ENCODE measurements at regions of chr5 and their contacts with region 1.

Region 1: DNA sequence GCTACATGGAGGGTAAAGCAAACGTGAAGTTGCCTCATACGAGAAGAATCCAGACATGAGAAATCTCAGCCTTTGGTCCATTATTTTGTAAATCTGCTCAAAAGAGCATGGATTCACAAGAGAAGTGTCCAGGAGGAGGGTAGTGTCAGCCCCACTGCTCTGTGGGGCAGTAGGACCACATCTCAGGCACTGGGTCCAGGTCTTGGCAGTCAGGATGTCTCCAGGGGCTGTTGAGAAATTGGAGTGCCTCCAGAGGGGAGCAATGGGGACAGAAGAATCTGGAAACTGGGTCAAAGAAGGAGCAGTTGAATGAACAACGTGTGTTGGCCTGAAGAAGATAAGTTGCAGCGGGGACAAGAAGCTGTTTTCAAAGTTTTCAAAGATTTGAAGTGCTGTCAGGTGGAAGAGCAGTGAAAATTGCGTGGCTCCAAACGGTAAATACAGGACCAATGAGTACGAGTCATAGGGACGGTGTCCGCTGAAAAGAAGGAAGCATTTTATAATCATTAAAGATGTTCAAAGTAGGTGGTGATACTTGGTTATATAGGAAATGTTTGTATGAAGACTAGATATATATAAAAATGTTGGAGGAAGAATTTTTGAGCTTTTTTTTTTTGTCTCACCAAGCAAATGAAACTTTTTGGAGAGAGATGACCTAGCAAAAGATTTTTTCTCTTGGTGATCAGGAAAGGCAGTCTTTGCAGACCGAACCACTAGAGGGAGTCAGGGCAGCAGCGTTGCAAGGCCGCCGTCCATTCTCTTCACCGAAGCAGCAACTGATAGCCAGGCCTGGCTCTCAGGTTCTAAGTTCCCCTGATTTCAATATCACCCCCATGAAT is 57.1 kb upstream of the ZBED3 start:
- DNase-seq: peak; percentile 42
- ATAC-seq: peak; percentile 88
- H3K4me3 ChIP-seq: no peak overlapping the region
- H3K27ac ChIP-seq: no peak overlapping the region
- H3K4me1 ChIP-seq: no peaks in the 10 kb centered on the region
- H3K27me3 ChIP-seq: no peaks in the 10 kb centered on the region
- CTCF ChIP-seq: peak; percentile 84
- EP300 ChIP-seq: no peak
- POLR2A ChIP-seq: no peak
- RAD21 ChIP-seq: peak; percentile 47; the same call in 1 of the 2 replicates

Region 2: GRCh38 chr5:77032654-77033034 is 111.6 kb before region 1 on chr5:
- CTCF ChIA-PET with region 1: no interaction called
- POLR2A ChIA-PET with region 1: no interaction called
- in situ Hi-C with region 1: no loop called
- intact Hi-C with region 1: no loop called
- DNase-seq: no peak
- ATAC-seq: no peak
- H3K4me3 ChIP-seq: no peak overlapping the region
- H3K27ac ChIP-seq: no peak overlapping the region
- H3K4me1 ChIP-seq: peaks cover 31% of the 10 kb centered on the region
- H3K27me3 ChIP-seq: no peaks in the 10 kb centered on the region; a peak in 1 of 5 replicates
- CTCF ChIP-seq: no peak
- EP300 ChIP-seq: no peak
- POLR2A ChIP-seq: no peak
- RAD21 ChIP-seq: no peak

Region 3: GRCh38 chr5:77120706-77121105 is 23.5 kb before region 1 on chr5:
- CTCF ChIA-PET with region 1: no interaction called
- POLR2A ChIA-PET with region 1: no interaction called
- in situ Hi-C with region 1: no loop called
- intact Hi-C with region 1: no loop called
- DNase-seq: no peak
- ATAC-seq: no peak
- H3K4me3 ChIP-seq: no peak overlapping the region
- H3K27ac ChIP-seq: no peak overlapping the region
- H3K4me1 ChIP-seq: no peaks in the 10 kb centered on the region
- H3K27me3 ChIP-seq: no peaks in the 10 kb centered on the region
- CTCF ChIP-seq: no peak
- EP300 ChIP-seq: no peak
- POLR2A ChIP-seq: no peak
- RAD21 ChIP-seq: no peak

Region 4: GRCh38 chr5:77239126-77239741 is 95.0 kb after region 1 on chr5:
- CTCF ChIA-PET with region 1: interaction called, 13 read pairs
- POLR2A ChIA-PET with region 1: no interaction called
- in situ Hi-C with region 1: loop called (anchors 5 kb)
- intact Hi-C with region 1: loop called (anchors 1 kb)
- DNase-seq: peak; percentile 12
- ATAC-seq: peak; percentile 64; the same call in 2 of the 3 replicates
- H3K4me3 ChIP-seq: no peak overlapping the region
- H3K27ac ChIP-seq: no peak overlapping the region
- H3K4me1 ChIP-seq: no peaks in the 10 kb centered on the region
- H3K27me3 ChIP-seq: 0 out of 5 replicates have a peak, but pooled peaks cover 0 to under 1% of the 10 kb centered on the region in 2 experiments
- CTCF ChIP-seq: no peak
- EP300 ChIP-seq: no peak
- POLR2A ChIP-seq: no peak
- RAD21 ChIP-seq: no peak

Region 5: DNA sequence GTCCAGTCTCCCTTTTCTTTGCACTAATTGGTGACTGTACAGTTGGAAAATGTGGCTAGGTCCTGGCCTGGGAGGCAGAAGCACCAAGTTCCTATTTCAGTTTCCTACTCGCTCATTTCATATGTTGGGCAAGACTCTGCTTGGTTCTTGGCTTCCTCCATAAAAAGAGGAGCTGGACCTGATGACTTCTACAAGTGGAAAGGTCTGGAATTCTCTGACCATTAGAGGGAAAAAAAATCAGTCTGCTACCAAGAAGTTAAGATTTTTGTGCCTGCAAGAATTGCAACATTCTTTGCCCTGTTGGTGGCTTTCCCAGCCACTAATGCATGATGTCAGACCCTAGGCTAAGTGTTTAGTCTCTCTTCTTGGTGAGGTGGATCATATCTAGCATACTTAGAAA is 256.4 kb after region 1 on chr5:
- CTCF ChIA-PET with region 1: no interaction called
- POLR2A ChIA-PET with region 1: no interaction called
- in situ Hi-C with region 1: no loop called
- intact Hi-C with region 1: no loop called
- DNase-seq: no peak
- ATAC-seq: no peak
- H3K4me3 ChIP-seq: no peak overlapping the region
- H3K27ac ChIP-seq: no peak overlapping the region
- H3K4me1 ChIP-seq: peaks cover 19% of the 10 kb centered on the region
- H3K27me3 ChIP-seq: peaks cover 0 to 10% of the 10 kb centered on the region in 2 experiments; a peak in 2 of 5 replicates
- CTCF ChIP-seq: no peak
- EP300 ChIP-seq: no peak
- POLR2A ChIP-seq: no peak
- RAD21 ChIP-seq: no peak

Region 6: GRCh38 chr5:77437194-77437593 is 293.0 kb after region 1 on chr5:
- CTCF ChIA-PET with region 1: interaction called, 4 read pairs
- POLR2A ChIA-PET with region 1: no interaction called
- in situ Hi-C with region 1: no loop called
- intact Hi-C with region 1: loop called (anchors 5 kb)
- DNase-seq: peak; percentile 18
- ATAC-seq: no peak
- H3K4me3 ChIP-seq: no peak overlapping the region
- H3K27ac ChIP-seq: no peak overlapping the region
- H3K4me1 ChIP-seq: no peaks in the 10 kb centered on the region
- H3K27me3 ChIP-seq: no peaks in the 10 kb centered on the region
- CTCF ChIP-seq: peak; percentile 61
- EP300 ChIP-seq: no peak
- POLR2A ChIP-seq: no peak
- RAD21 ChIP-seq: no peak

Region 7: GRCh38 chr5:77491783-77492652 is 347.8 kb after region 1 on chr5 and contains the start of gene WDR41:
- CTCF ChIA-PET with region 1: interaction called, 14 read pairs
- POLR2A ChIA-PET with region 1: no interaction called
- in situ Hi-C with region 1: loop called (anchors 5 kb)
- intact Hi-C with region 1: loop called (anchors 2 kb)
- DNase-seq: peak; percentile 72
- ATAC-seq: peak; percentile 97
- H3K4me3 ChIP-seq: peak within 1 kb of the TSS; percentile 81 to 99 (median 88)
- H3K27ac ChIP-seq: peak within 1 kb of the TSS; percentile 81
- H3K4me1 ChIP-seq: peaks cover 12% of the 10 kb centered on the region
- H3K27me3 ChIP-seq: no peaks in the 10 kb centered on the region; a peak in 1 of 5 replicates
- CTCF ChIP-seq: peak; percentile 90
- EP300 ChIP-seq: no peak
- POLR2A ChIP-seq: peak; percentile 60 to 67; a peak in 3 of 4 replicates
- RAD21 ChIP-seq: peak; percentile 92
- total RNA-seq, gene WDR41: 39.3 and 52.8 TPM in 2 replicates

Region 8: DNA sequence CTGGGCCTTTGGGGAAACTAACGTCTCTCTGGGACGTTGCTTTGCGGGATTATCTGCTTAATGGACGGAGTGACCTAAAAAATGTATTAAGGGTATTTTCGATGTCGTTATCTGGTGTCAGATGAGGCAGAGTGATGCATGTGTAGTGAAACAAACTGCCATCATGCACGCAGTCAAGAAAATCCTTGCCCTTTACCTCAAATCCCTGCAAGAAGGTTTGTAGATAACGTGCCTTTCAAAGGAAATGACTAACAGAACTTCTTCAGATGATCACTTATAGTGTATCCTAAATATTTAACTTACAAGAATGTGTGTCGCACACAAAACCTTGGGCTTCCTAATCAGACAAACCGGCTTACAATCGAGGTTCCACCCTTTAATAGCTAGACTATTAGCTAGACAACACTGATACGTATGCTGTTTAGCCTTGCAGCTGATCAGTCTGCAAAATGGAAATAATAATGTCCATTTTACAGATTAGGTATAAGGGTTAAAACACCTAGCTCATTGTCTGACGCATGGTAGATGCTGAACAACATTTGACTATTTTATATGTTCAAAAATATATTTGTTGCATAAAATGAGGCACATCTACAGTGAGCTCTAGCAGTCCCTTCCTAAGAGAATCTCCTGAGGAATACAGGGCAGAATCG is 632.5 kb after region 1 on chr5:
- CTCF ChIA-PET with region 1: no interaction called
- POLR2A ChIA-PET with region 1: no interaction called
- in situ Hi-C with region 1: no loop called
- intact Hi-C with region 1: no loop called
- DNase-seq: no peak
- ATAC-seq: no peak
- H3K4me3 ChIP-seq: peak overlapping the region; percentile 74 to 90 (median 85)
- H3K27ac ChIP-seq: peak overlapping the region; percentile 44
- H3K4me1 ChIP-seq: peaks cover 52% of the 10 kb centered on the region
- H3K27me3 ChIP-seq: no peaks in the 10 kb centered on the region
- CTCF ChIP-seq: no peak
- EP300 ChIP-seq: no peak
- POLR2A ChIP-seq: no peak
- RAD21 ChIP-seq: no peak